ENCODE measurements at regions of chr6 and their contacts with region 1.

Region 1: GRCh38 chr6:87714093-87714809 is 12.2 kb upstream of the AKIRIN2 start:
- DNase-seq: peak; percentile 12
- H3K4me3 Mint-ChIP-seq: no peak overlapping the region
- H3K27ac Mint-ChIP-seq: no peak overlapping the region
- H3K4me1 Mint-ChIP-seq: peaks cover 5% of the 10 kb centered on the region
- H3K27me3 Mint-ChIP-seq: no peaks in the 10 kb centered on the region

Region 2: GRCh38 chr6:87333591-87334181 is 380.6 kb before region 1 on chr6:
- CTCF ChIA-PET with region 1: no interaction called
- intact Hi-C with region 1: no loop called
- DNase-seq: no peak
- H3K4me3 Mint-ChIP-seq: no peak overlapping the region
- H3K27ac Mint-ChIP-seq: no peak overlapping the region
- H3K4me1 Mint-ChIP-seq: peaks cover 22% of the 10 kb centered on the region
- H3K27me3 Mint-ChIP-seq: no peaks in the 10 kb centered on the region

Region 3: DNA sequence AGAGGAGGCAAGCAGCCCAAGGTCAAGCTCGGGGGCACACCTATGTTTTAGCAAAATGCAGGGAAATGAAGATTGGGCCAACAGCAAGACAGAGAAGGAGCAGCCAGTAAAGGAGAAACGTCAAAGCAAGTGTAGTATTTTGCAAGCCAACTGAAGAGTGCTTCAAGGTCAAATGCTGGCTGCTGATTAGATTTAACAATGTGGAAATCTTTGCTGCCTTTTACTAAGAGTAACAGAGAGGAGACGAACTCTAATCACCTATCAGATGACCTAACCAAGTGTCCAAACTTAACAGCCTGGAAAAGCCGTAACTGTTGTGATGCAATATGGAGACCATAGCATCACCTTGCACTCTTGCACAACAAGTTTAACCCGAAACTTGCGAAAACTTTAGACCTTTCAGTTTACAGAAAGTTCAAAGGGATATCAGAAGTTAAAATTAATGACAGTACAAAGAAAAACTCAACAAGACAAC is 42.7 kb before region 1 on chr6:
- CTCF ChIA-PET with region 1: no interaction called
- intact Hi-C with region 1: no loop called
- DNase-seq: no peak
- H3K4me3 Mint-ChIP-seq: no peak overlapping the region
- H3K27ac Mint-ChIP-seq: no peak overlapping the region
- H3K4me1 Mint-ChIP-seq: peaks cover 9% of the 10 kb centered on the region
- H3K27me3 Mint-ChIP-seq: no peaks in the 10 kb centered on the region

Region 4: GRCh38 chr6:87724983-87725811 is 10.9 kb after region 1 on chr6:
- CTCF ChIA-PET with region 1: interaction called, 3 read pairs
- intact Hi-C with region 1: loop called (anchors 1 kb)
- DNase-seq: no peak
- H3K4me3 Mint-ChIP-seq: no peak overlapping the region
- H3K27ac Mint-ChIP-seq: no peak overlapping the region
- H3K4me1 Mint-ChIP-seq: peaks cover 18% of the 10 kb centered on the region
- H3K27me3 Mint-ChIP-seq: no peaks in the 10 kb centered on the region

Region 5: GRCh38 chr6:87817183-87817582 is 102.9 kb after region 1 on chr6:
- CTCF ChIA-PET with region 1: no interaction called
- intact Hi-C with region 1: no loop called
- DNase-seq: no peak
- H3K4me3 Mint-ChIP-seq: no peak overlapping the region
- H3K27ac Mint-ChIP-seq: no peak overlapping the region
- H3K4me1 Mint-ChIP-seq: no peaks in the 10 kb centered on the region
- H3K27me3 Mint-ChIP-seq: peaks cover 3% of the 10 kb centered on the region

Region 6: DNA sequence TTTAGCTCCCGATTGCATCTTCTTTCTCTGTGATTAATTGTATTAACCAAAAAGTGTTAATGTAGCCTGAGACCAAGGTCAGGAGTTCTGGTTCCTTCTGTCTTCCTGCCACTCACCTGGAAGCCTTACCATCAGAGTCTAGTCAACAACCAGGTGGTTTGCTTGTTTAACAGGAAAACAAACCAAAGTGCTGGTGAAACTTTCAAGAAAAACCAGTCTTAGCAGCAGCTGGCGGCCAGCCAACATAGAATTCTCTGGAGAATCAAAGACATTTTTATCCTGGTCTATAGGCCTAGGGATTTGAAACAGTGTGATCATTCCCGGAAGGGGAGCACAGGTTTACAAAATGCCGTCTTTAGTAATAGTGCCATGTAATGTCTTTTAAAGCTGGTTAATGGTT is 134.3 kb after region 1 on chr6:
- CTCF ChIA-PET with region 1: no interaction called
- intact Hi-C with region 1: no loop called
- DNase-seq: no peak
- H3K4me3 Mint-ChIP-seq: no peak overlapping the region
- H3K27ac Mint-ChIP-seq: no peak overlapping the region
- H3K4me1 Mint-ChIP-seq: no peaks in the 10 kb centered on the region
- H3K27me3 Mint-ChIP-seq: peaks cover 3% of the 10 kb centered on the region

Measured in activated naive CD4-positive, alpha-beta T cell treated with anti-CD3 and anti-CD28 coated beads for 36 hours (primary cell).